T-cell (primary cell): ENCODE measurements at regions of chr2 and their contacts with region 1.

Region 1: DNA sequence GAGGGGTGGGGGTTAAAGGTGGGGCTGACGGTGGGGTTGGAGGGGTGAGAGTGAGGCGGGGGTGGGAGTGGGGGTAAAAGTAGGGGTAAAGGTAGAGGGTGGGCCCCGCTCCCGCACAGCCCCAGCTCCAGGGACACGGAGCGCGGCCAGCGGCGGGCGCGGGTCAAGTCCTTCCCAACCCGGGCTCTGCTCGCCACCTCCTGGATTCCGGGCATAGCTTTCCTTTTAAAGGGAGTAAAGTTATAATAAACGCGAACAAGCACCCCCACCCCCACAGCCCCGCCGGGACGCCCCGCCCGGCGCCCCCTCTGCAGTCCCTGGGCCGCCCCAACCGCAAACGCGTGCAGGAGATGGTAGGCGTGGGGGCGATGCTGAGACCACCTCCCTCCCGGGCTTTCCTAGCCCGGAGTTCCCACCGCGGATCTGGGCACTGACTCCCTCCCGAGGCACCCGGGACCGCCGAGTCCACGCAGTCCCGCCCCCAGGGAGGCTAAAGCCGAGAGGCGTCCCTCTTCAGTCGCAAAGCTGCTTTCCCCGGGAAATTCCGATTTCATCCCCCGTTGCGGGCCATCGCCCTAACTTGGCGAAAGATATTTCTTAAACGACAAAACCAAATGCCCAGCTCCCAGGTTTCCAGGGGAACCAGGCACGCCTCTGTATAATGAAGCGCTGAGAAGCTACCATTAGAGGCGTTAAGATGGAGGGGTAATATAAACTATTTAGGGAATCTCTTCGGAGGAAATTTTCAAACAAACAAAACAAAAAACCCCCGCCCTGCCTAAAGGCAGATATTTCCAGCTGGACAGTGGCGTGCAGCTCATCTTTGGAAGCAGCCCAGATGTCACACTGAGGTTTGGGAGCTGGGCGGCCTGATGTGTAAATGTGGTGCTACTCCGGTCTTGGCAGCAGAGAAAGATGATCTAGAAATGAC is at the start of gene LIMS2:
- DNase-seq: no peak
- ATAC-seq: no peak
- H3K4me3 ChIP-seq: peak within 1 kb of the TSS in 1 of 2 donors; percentile 52
- H3K4me3 Mint-ChIP-seq: peak within 1 kb of the TSS; percentile 65 to 84 (median 75)
- H3K27ac ChIP-seq: no peak within 1 kb of the TSS
- H3K27ac Mint-ChIP-seq: no peak within 1 kb of the TSS
- H3K4me1 ChIP-seq: peaks cover 0 to 14% of the 10 kb centered on the region in 2 experiments
- H3K4me1 Mint-ChIP-seq: peaks cover 7 to 14% (median 8%) of the 10 kb centered on the region in 3 donors
- H3K27me3 ChIP-seq: peaks cover 0 to 72% of the 10 kb centered on the region in 2 experiments
- H3K27me3 Mint-ChIP-seq: peaks cover 32 to 64% of the 10 kb centered on the region in 2 donors
- total RNA-seq, gene LIMS2: 8.4 to 14.8 (median 10.3) TPM

Region 2: GRCh38 chr2:127735537-127736399 is 60.2 kb after region 1 on chr2:
- CTCF ChIA-PET with region 1: no interaction called
- POLR2A ChIA-PET with region 1: no interaction called
- DNase-seq: no peak
- ATAC-seq: no peak
- H3K4me3 ChIP-seq: no peak overlapping the region
- H3K4me3 Mint-ChIP-seq: no peak overlapping the region
- H3K27ac ChIP-seq: no peak overlapping the region
- H3K27ac Mint-ChIP-seq: no peak overlapping the region
- H3K4me1 ChIP-seq: no peaks in the 10 kb centered on the region
- H3K4me1 Mint-ChIP-seq: peaks cover under 1 to 13% (median 11%) of the 10 kb centered on the region in 3 donors
- H3K27me3 ChIP-seq: no peaks in the 10 kb centered on the region
- H3K27me3 Mint-ChIP-seq: no peaks in the 10 kb centered on the region

Region 3: GRCh38 chr2:127968610-127969339 is 293.2 kb after region 1 on chr2:
- CTCF ChIA-PET with region 1: no interaction called
- POLR2A ChIA-PET with region 1: interaction called in 1 of 2 experiments, 11 read pairs
- DNase-seq: no peak
- ATAC-seq: no peak
- H3K4me3 ChIP-seq: no peak overlapping the region
- H3K4me3 Mint-ChIP-seq: no peak overlapping the region
- H3K27ac ChIP-seq: no peak overlapping the region
- H3K27ac Mint-ChIP-seq: no peak overlapping the region
- H3K4me1 ChIP-seq: no peaks in the 10 kb centered on the region
- H3K4me1 Mint-ChIP-seq: peaks cover 0 to 2% (median 2%) of the 10 kb centered on the region in 3 donors
- H3K27me3 ChIP-seq: no peaks in the 10 kb centered on the region
- H3K27me3 Mint-ChIP-seq: no peaks in the 10 kb centered on the region